SK-N-SH (cell line): ENCODE measurements at regions of chr16 and their contacts with region 1.

Region 1: GRCh38 chr16:87765776-87766484 is at the start of gene KLHDC4:
- DNase-seq: peak; percentile 94
- H3K4me3 ChIP-seq: peak within 1 kb of the TSS; percentile 79 to 97
- H3K27ac ChIP-seq: peak within 1 kb of the TSS; percentile 66 to 78
- H3K4me1 ChIP-seq: peaks cover 4 to 5% of the 10 kb centered on the region in 2 experiments; a peak in 1 of 4 replicates
- H3K27me3 ChIP-seq: no peaks in the 10 kb centered on the region
- CTCF ChIP-seq: no peak
- EP300 ChIP-seq: no peak
- RAD21 ChIP-seq: no peak
- polyA plus RNA-seq, gene KLHDC4: 39.0 and 51.2 TPM in 2 replicates

Region 2: DNA sequence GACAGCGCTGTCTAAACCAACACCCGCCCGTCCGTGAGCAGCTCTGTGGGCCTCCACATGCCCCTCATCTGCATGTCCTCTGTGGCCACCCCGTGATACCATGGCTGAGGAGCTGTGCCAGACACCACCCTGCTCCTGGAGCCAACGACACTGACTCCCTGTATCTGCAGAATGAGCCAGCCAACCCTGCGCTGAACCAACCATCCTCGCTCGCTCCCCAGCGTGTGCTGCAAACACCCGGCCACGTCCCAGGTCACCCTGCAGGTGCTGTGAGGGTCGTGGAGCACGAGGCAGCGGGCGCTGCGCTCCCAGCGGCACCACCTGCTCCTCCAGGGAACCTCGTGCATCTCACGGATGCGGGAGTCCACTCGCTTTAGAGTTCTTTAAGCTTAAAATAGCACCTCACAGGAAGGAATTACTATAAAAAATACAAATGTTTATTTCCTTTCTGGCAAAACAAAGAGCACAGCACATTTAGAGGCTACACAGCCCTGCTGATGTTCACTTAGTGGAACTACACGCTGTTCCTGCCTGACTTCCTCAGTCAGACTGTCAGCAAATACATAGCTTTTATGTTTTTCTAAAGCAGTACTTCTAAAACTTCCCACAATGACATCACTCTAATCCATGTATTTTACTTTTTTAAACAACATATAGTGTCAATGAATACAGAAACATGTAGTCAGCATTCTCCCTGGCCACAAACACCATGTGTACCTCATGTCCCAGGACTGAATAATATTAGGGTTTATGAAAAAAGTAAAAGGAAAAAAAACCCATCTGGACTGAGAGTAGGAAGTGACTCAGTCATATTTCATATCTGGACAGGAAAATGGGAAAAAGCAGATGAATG is 330.3 kb before region 1 on chr16:
- CTCF ChIA-PET with region 1: no interaction called
- POLR2A ChIA-PET with region 1: no interaction called
- DNase-seq: peak; percentile 41
- H3K4me3 ChIP-seq: peak overlapping the region; percentile 25 to 63; a peak in 3 of 4 replicates
- H3K27ac ChIP-seq: peak overlapping the region; percentile 71 to 93
- H3K4me1 ChIP-seq: peaks cover 18 to 37% of the 10 kb centered on the region in 2 experiments
- H3K27me3 ChIP-seq: no peaks in the 10 kb centered on the region
- CTCF ChIP-seq: no peak
- EP300 ChIP-seq: no peak; a peak in 1 of 4 replicates
- RAD21 ChIP-seq: no peak

Region 3: DNA sequence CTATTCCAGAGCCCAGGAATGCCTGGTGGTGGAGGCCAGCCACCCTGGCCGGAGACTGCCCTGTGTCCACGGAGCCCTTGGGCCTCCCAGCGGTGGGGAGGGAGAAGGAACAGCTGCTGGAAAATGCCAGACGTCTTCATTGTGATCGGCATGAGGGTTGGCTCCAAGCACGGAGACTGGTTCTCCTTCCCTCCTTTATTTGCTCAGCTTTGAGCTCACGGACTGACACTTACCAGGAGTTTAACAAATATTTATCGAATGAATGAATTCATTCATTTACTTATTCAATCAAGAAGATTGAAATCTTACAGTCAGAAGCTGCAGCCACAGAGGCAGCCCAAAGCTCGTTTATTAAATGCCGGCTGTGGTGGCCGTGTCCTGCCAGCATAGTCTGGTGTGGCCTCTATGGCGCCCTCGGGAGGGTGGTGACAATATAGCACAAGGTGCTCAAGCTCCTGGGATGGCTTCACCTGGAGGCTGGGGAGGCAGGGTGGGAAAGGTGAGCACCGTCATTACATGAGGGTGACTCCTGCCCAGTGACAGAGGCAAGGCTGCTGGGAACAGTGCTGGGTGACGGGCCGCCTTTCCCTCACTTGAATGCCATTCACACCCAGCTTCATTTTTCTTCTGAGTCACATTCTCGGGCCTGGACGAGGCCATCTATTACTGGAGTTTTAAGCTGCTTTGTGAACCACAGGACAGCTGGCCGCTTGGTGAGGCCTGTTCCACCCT is 194.6 kb before region 1 on chr16:
- CTCF ChIA-PET with region 1: interaction called, 10 read pairs
- POLR2A ChIA-PET with region 1: no interaction called
- DNase-seq: peak; percentile 71
- H3K4me3 ChIP-seq: no peak overlapping the region
- H3K27ac ChIP-seq: no peak overlapping the region; a peak in 1 of 4 replicates
- H3K4me1 ChIP-seq: peaks cover 0 to 21% of the 10 kb centered on the region in 2 experiments; a peak in 1 of 4 replicates
- H3K27me3 ChIP-seq: no peaks in the 10 kb centered on the region; the same call in 1 of the 2 replicates
- CTCF ChIP-seq: peak; percentile 37
- EP300 ChIP-seq: no peak
- RAD21 ChIP-seq: peak; percentile 40

Region 4: GRCh38 chr16:87581833-87582203 is 184.1 kb before region 1 on chr16:
- CTCF ChIA-PET with region 1: interaction called, 56 read pairs
- POLR2A ChIA-PET with region 1: no interaction called
- DNase-seq: peak; percentile 58
- H3K4me3 ChIP-seq: peak overlapping the region in 1 of 2 experiments; percentile 50; a peak in 1 of 4 replicates
- H3K27ac ChIP-seq: peak overlapping the region; percentile 48 to 99; a peak in 3 of 4 replicates
- H3K4me1 ChIP-seq: peaks cover 14 to 19% of the 10 kb centered on the region in 2 experiments; a peak in 3 of 4 replicates
- H3K27me3 ChIP-seq: no peaks in the 10 kb centered on the region
- CTCF ChIP-seq: no peak
- EP300 ChIP-seq: peak in 1 of 2 experiments; percentile 75; a peak in 1 of 4 replicates
- RAD21 ChIP-seq: no peak

Region 5: DNA sequence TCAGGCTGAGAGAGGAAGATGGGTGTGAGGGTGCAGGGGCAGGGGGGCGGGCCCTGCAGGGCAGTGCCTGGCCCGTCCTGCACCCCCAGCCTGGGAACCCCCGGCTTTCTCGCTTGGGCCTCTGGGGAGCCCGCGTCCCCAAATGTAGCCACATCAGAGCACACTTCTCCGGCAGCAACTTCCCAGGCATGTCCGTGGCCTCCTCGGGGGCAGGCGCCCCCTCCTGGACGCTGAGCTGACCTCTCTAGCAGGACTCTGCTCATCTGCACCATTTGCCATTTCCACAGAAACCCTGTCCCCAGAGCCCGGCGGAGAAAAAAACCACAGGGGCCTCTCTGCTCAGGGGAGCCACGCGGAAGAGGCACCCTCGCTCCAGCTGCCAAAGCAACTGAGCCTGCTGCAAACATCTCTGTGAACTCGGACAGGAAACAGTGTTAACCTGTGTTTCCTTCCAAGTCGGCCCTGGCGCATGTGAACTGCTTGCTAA is 63.6 kb before region 1 on chr16:
- CTCF ChIA-PET with region 1: interaction called, 11 read pairs
- POLR2A ChIA-PET with region 1: no interaction called
- DNase-seq: peak; percentile 82
- H3K4me3 ChIP-seq: no peak overlapping the region
- H3K27ac ChIP-seq: no peak overlapping the region
- H3K4me1 ChIP-seq: no peaks in the 10 kb centered on the region
- H3K27me3 ChIP-seq: no peaks in the 10 kb centered on the region
- CTCF ChIP-seq: peak; percentile 54
- EP300 ChIP-seq: no peak
- RAD21 ChIP-seq: peak; percentile 44

Region 6: GRCh38 chr16:87723226-87723623 is 42.7 kb before region 1 on chr16:
- CTCF ChIA-PET with region 1: interaction called, 24 read pairs
- POLR2A ChIA-PET with region 1: interaction called, 10 read pairs
- DNase-seq: peak; percentile 99
- H3K4me3 ChIP-seq: no peak overlapping the region
- H3K27ac ChIP-seq: peak overlapping the region in 1 of 2 experiments; percentile 99; a peak in 2 of 4 replicates
- H3K4me1 ChIP-seq: peaks cover 10 to 43% of the 10 kb centered on the region in 2 experiments; a peak in 3 of 4 replicates
- H3K27me3 ChIP-seq: no peaks in the 10 kb centered on the region
- CTCF ChIP-seq: no peak
- EP300 ChIP-seq: peak in 1 of 2 experiments; percentile 83; a peak in 2 of 4 replicates
- RAD21 ChIP-seq: no peak; the same call in 1 of the 2 replicates

Region 7: DNA sequence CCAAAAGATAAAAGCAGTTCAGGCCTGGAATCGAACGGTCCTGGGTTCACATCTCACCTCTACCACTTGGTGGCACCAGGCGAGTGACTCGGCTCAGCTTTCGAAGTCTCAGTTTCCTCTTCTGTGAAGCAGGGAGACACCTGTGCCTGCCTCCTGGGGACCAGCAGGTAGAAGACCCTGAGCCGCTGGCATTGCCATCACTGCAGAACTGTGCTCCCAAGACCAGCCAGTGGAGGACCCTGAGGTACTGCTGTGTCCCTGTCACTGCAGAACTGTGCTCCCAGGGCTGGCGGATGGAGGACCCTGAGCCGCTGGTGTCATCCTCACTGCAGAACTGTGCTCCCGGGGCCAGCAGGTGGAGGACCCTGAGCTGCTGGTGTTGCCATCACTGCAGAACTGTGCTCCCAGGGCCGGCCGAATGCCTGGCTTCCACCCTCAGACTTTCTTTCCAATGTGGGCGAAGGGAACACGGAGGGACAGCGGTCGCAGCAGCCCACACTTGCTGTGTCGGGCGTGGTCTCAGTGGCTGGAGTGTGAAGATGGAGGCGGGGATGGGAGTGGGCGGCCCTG is 112.1 kb after region 1 on chr16:
- CTCF ChIA-PET with region 1: interaction called, 11 read pairs
- POLR2A ChIA-PET with region 1: interaction called, 3 read pairs
- DNase-seq: no peak
- H3K4me3 ChIP-seq: no peak overlapping the region
- H3K27ac ChIP-seq: no peak overlapping the region
- H3K4me1 ChIP-seq: no peaks in the 10 kb centered on the region; a peak in 1 of 4 replicates
- H3K27me3 ChIP-seq: no peaks in the 10 kb centered on the region
- CTCF ChIP-seq: peak; percentile 22
- EP300 ChIP-seq: no peak
- RAD21 ChIP-seq: no peak